B cell (primary cell): ENCODE measurements at regions of chr2 and their contacts with region 1.

Region 1: DNA sequence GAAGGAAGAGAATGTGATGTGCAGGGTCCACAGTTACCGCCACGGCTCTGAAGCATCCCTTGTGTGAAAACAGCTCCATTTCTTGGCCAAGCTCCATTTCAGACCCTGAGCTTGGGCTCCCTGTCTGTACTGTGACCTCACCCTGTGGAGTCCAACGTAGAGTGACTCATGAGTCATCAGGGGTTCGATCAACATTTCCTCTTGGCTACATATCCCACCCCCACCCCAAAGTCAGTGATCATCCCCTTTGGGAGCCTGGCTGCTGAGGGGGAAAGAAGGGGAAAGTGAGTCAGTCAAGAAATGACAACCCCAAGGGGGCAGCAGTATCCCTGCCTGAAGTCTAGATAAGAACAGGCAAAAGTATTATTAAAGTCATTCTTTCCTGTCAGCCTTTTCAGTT is 62.2 kb downstream of the PAPOLG start:
- DNase-seq: peak; percentile 56
- ATAC-seq: peak; percentile 57
- H3K4me3 ChIP-seq: no peak overlapping the region
- H3K4me3 Mint-ChIP-seq: peak overlapping the region; percentile 34
- H3K27ac ChIP-seq: no peak overlapping the region
- H3K27ac Mint-ChIP-seq: peak overlapping the region; percentile 46
- H3K4me1 ChIP-seq: peaks cover 32 to 37% of the 10 kb centered on the region in 2 donors
- H3K4me1 Mint-ChIP-seq: peaks cover 44% of the 10 kb centered on the region
- H3K27me3 ChIP-seq: no peaks in the 10 kb centered on the region
- H3K27me3 Mint-ChIP-seq: no peaks in the 10 kb centered on the region
- CTCF ChIP-seq: peak; percentile 51

Region 2: GRCh38 chr2:60312618-60313017 is 505.7 kb before region 1 on chr2:
- CTCF ChIA-PET with region 1: no interaction called
- POLR2A ChIA-PET with region 1: no interaction called
- intact Hi-C with region 1: no loop called
- DNase-seq: peak; percentile 42
- ATAC-seq: no peak
- H3K4me3 ChIP-seq: no peak overlapping the region
- H3K4me3 Mint-ChIP-seq: peak overlapping the region; percentile 33
- H3K27ac ChIP-seq: peak overlapping the region in 1 of 2 donors; percentile 9
- H3K27ac Mint-ChIP-seq: peak overlapping the region; percentile 70
- H3K4me1 ChIP-seq: peaks cover 64 to 83% of the 10 kb centered on the region in 2 donors
- H3K4me1 Mint-ChIP-seq: peaks cover 89% of the 10 kb centered on the region
- H3K27me3 ChIP-seq: no peaks in the 10 kb centered on the region
- H3K27me3 Mint-ChIP-seq: no peaks in the 10 kb centered on the region
- CTCF ChIP-seq: no peak

Region 3: DNA sequence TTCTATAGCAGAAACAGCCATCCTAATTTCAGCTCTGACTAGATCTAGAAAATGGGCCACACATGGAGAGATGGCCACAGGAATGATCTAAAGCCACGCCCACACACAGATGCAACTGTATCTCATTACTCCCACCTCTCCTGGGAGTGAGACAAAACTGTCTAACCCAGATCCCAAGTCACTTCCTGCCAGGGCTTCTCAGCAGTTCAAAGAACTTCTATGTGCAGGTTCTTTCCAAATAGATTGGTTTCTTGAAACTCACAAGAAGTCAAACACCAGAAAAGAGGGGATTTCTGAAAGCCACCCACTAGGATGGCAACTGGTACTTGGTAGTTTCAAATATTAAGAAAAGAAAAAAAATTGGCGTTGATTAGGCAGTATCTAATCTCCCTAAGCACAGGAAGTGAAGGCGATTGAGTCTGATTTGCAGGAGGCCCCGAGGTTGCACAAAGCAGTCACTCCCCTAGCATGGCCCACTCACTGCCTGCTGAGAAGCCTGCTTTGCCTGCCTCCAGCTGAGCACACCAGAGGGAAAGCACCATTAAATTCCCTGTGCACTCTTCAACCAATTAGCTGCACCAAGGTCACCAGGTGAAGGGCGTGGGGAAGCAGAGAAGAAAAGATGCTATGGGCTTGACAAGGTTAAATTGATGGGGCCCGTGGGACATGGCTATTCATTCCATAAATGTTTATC is 11.1 kb before region 1 on chr2:
- CTCF ChIA-PET with region 1: interaction called, 11 read pairs
- POLR2A ChIA-PET with region 1: no interaction called
- intact Hi-C with region 1: no loop called
- DNase-seq: peak; percentile 32
- ATAC-seq: peak; percentile 56
- H3K4me3 ChIP-seq: no peak overlapping the region
- H3K4me3 Mint-ChIP-seq: no peak overlapping the region
- H3K27ac ChIP-seq: peak overlapping the region; percentile 31 to 55
- H3K27ac Mint-ChIP-seq: peak overlapping the region; percentile 83
- H3K4me1 ChIP-seq: peaks cover 20 to 32% of the 10 kb centered on the region in 2 donors
- H3K4me1 Mint-ChIP-seq: peaks cover 34% of the 10 kb centered on the region
- H3K27me3 ChIP-seq: no peaks in the 10 kb centered on the region
- H3K27me3 Mint-ChIP-seq: no peaks in the 10 kb centered on the region
- CTCF ChIP-seq: no peak

Region 4: DNA sequence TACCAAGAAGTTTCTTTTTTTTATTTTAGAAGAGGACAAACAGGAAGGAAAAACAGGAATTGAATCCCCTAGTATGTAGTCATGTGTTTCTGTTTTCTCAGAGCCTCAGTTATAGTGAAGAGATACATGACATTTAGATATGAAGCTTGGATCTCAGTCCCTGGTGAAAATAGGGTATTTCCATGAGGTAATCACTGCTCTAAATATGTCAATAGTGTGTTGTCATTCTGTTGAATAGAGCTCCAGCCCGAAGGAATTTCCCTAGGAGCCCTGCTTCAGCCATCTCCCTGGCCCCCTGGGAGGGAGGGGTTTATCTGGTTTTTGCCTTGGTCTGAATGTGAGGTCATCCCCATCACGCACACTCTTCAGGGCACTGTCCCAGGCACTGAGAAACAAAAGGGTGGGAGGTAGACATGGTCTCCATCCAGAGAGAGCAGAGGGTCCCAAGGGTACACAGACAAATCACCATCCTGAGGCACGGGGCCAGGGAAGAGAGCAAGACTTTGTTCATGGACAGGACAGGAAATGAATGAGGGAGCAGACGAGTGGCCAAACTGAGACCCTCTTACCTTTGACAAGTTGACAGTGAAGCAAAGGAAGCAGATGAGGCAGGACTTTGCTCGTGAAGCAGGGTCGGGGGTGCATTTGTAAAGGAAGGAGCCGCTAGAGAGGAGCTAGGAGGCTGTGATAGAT is 16.1 kb after region 1 on chr2:
- CTCF ChIA-PET with region 1: interaction called, 17 read pairs
- POLR2A ChIA-PET with region 1: no interaction called
- intact Hi-C with region 1: loop called (anchors 2 kb)
- DNase-seq: peak; percentile 71
- ATAC-seq: peak; percentile 79
- H3K4me3 ChIP-seq: no peak overlapping the region
- H3K4me3 Mint-ChIP-seq: peak overlapping the region; percentile 69
- H3K27ac ChIP-seq: peak overlapping the region; percentile 49 to 65
- H3K27ac Mint-ChIP-seq: peak overlapping the region; percentile 94
- H3K4me1 ChIP-seq: peaks cover 56 to 60% of the 10 kb centered on the region in 2 donors
- H3K4me1 Mint-ChIP-seq: peaks cover 65% of the 10 kb centered on the region
- H3K27me3 ChIP-seq: no peaks in the 10 kb centered on the region
- H3K27me3 Mint-ChIP-seq: no peaks in the 10 kb centered on the region
- CTCF ChIP-seq: no peak